Activated CD4-positive, alpha-beta T cell treated with anti-CD3 and anti-CD28 coated beads for 36 hours (primary cell): ENCODE measurements at regions of chr10 and their contacts with region 1.

Region 1: DNA sequence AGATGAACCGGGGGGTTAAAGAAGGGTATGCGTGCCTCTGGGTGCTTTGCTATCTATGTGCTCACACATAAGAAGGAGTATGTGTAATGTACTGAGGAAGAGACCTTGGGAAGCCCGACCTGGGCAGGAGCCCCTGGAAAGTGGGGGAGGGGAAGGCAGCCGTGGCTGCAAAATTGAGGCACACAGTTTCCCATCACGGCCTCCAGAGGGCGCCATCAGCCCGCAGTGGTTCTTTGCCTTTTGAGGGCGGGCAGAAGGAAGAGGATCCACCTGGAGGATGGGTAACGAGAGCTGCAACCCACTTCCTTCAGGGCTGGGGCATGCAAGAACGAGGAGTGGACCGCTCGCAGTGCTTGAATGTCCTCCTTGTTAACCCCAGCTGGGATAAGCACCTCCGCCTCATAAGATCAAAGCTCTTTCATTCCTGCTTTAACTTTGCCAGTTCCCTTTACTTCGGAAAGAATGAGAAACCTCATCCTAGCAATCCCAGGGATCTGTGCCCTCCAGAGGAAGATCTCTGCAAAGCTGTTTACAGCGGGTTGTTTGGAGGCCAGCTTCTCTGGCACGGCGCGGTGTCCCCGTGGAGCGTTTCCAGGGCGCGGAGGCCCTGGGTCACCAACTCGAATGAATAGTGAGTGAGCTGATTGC is 77.9 kb downstream of the PCGF5 start:
- DNase-seq: peak; percentile 91
- ATAC-seq: peak; percentile 98
- H3K4me3 Mint-ChIP-seq: peak overlapping the region; percentile 61
- H3K27ac Mint-ChIP-seq: peak overlapping the region; percentile 22
- H3K4me1 Mint-ChIP-seq: peaks cover 9% of the 10 kb centered on the region
- H3K27me3 Mint-ChIP-seq: no peaks in the 10 kb centered on the region

Region 2: GRCh38 chr10:90847417-90847816 is 450.9 kb before region 1 on chr10:
- CTCF ChIA-PET with region 1: no interaction called
- POLR2A ChIA-PET with region 1: no interaction called
- intact Hi-C with region 1: no loop called
- DNase-seq: no peak
- ATAC-seq: peak; percentile 55
- H3K4me3 Mint-ChIP-seq: no peak overlapping the region
- H3K27ac Mint-ChIP-seq: no peak overlapping the region
- H3K4me1 Mint-ChIP-seq: peaks cover 2% of the 10 kb centered on the region
- H3K27me3 Mint-ChIP-seq: peaks cover 44% of the 10 kb centered on the region

Region 3: DNA sequence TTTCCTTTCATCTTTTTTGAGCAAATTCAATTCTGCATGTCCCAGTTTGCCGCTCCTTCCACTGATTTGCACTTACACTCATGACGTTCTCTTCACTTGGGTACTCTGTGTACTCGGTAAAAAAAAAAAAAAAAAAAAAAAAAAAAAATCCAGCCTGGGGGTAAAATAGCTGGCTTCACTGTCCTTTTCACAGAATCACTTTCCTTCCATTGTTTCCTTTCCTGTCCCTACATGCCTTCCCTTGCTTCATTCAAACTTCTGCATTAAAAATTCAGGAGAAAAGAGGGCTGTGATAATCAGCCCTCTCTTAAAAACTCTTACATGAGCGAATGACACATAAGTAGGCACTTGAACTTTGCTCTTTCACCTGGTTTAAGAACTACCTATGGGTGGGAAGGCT is 386.2 kb before region 1 on chr10:
- CTCF ChIA-PET with region 1: interaction called, 4 read pairs
- POLR2A ChIA-PET with region 1: no interaction called
- intact Hi-C with region 1: loop called in 1 of 2 experiments (anchors 1 kb)
- DNase-seq: no peak
- ATAC-seq: no peak
- H3K4me3 Mint-ChIP-seq: no peak overlapping the region
- H3K27ac Mint-ChIP-seq: no peak overlapping the region
- H3K4me1 Mint-ChIP-seq: peaks cover 2% of the 10 kb centered on the region
- H3K27me3 Mint-ChIP-seq: no peaks in the 10 kb centered on the region

Region 4: GRCh38 chr10:91313796-91314485 is 15.6 kb after region 1 on chr10:
- CTCF ChIA-PET with region 1: interaction called, 26 read pairs
- POLR2A ChIA-PET with region 1: no interaction called
- intact Hi-C with region 1: no loop called
- DNase-seq: peak; percentile 50
- ATAC-seq: peak; percentile 96
- H3K4me3 Mint-ChIP-seq: no peak overlapping the region
- H3K27ac Mint-ChIP-seq: peak overlapping the region; percentile 84
- H3K4me1 Mint-ChIP-seq: peaks cover 11% of the 10 kb centered on the region
- H3K27me3 Mint-ChIP-seq: peaks cover 16% of the 10 kb centered on the region

Region 5: GRCh38 chr10:91389636-91390512 is 91.5 kb after region 1 on chr10:
- CTCF ChIA-PET with region 1: interaction called, 11 read pairs
- POLR2A ChIA-PET with region 1: no interaction called
- intact Hi-C with region 1: loop called (anchors 1 kb)
- DNase-seq: no peak
- ATAC-seq: peak; percentile 81
- H3K4me3 Mint-ChIP-seq: no peak overlapping the region
- H3K27ac Mint-ChIP-seq: no peak overlapping the region
- H3K4me1 Mint-ChIP-seq: peaks cover 6% of the 10 kb centered on the region
- H3K27me3 Mint-ChIP-seq: peaks cover 18% of the 10 kb centered on the region

Region 6: GRCh38 chr10:91551856-91552255 is 253.5 kb after region 1 on chr10:
- CTCF ChIA-PET with region 1: interaction called, 4 read pairs
- POLR2A ChIA-PET with region 1: no interaction called
- intact Hi-C with region 1: loop called (anchors 1 to 5 kb)
- DNase-seq: peak; percentile 36
- ATAC-seq: no peak
- H3K4me3 Mint-ChIP-seq: no peak overlapping the region
- H3K27ac Mint-ChIP-seq: no peak overlapping the region
- H3K4me1 Mint-ChIP-seq: no peaks in the 10 kb centered on the region
- H3K27me3 Mint-ChIP-seq: peaks cover 6% of the 10 kb centered on the region

Region 7: DNA sequence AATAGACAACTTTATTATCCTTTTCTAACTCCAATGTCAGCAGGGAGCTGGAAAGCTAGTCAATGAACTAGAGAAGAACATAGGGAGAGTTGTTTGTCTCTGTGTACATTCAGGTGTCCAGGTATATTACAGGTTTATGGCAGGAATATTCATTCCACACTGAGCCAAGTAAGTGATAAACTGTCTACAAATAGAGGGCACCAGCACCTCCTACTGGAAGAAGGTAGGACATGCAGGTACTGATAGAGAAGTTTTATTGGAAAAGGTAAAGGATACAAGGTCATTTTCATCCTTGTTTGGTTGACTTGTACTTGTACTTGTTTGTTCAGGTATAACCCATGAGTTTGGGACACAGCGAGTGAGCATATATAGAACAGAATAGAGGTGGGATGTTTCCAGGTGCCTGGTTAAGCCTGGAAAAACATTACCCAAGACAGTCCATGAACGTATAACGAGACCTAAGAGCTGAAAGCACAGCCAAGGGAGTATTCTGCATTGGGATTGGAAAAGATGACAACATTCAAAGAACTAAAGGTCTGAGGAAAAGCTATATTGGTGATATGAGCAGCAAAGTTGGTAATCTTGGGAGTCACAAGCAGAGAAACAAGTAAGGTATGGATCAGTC is 395.9 kb after region 1 on chr10:
- CTCF ChIA-PET with region 1: interaction called, 9 read pairs
- POLR2A ChIA-PET with region 1: no interaction called
- intact Hi-C with region 1: loop called (anchors 1 to 5 kb)
- DNase-seq: peak; percentile 31
- ATAC-seq: no peak
- H3K4me3 Mint-ChIP-seq: no peak overlapping the region
- H3K27ac Mint-ChIP-seq: no peak overlapping the region
- H3K4me1 Mint-ChIP-seq: peaks cover 4% of the 10 kb centered on the region
- H3K27me3 Mint-ChIP-seq: peaks cover 4% of the 10 kb centered on the region